AG04450 (cell line): ENCODE measurements at regions of chr3 and their contacts with region 1.

Region 1: GRCh38 chr3:35965908-35966307 is 326.6 kb downstream of the ARPP21 start:
- DNase-seq: peak; percentile 1
- H3K4me3 ChIP-seq: no peak overlapping the region
- H3K27ac ChIP-seq: no peak overlapping the region
- H3K27me3 ChIP-seq: no peaks in the 10 kb centered on the region
- CTCF ChIP-seq: peak; percentile 55

Region 2: DNA sequence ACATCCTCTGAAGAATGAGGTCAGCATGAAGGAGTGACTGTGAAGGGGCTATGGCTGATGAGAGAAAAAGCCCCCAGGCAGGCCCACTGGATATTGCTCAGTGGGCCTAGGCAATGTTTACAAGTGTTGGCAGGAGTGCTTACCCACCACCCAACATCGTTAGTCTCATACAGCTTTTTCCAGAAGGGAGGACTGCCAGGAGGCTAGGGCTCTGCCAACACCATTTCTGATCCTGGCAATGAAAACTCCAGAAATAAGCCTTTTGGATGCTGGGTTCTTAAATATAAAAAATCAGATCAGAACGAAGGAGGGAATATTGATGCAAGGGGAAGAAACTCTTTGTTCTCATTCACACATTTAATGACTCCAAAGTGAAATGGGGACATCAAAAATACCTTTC is 609.3 kb after region 1 on chr3:
- CTCF ChIA-PET with region 1: no interaction called
- POLR2A ChIA-PET with region 1: no interaction called
- DNase-seq: no peak
- H3K4me3 ChIP-seq: no peak overlapping the region
- H3K27ac ChIP-seq: no peak overlapping the region
- H3K27me3 ChIP-seq: no peaks in the 10 kb centered on the region
- CTCF ChIP-seq: no peak

Region 3: GRCh38 chr3:36707623-36708409 is 741.9 kb after region 1 on chr3:
- CTCF ChIA-PET with region 1: interaction called, 12 read pairs
- POLR2A ChIA-PET with region 1: no interaction called
- DNase-seq: no peak
- H3K4me3 ChIP-seq: no peak overlapping the region
- H3K27ac ChIP-seq: no peak overlapping the region
- H3K27me3 ChIP-seq: peaks cover 4% of the 10 kb centered on the region
- CTCF ChIP-seq: peak; percentile 34